Mammary epithelial cell (primary cell): ENCODE measurements at regions of chr11 and their contacts with region 1.

Region 1: GRCh38 chr11:47565340-47566148 is at the start of gene PTPMT1:
- DNase-seq: peak; percentile 62
- H3K4me3 ChIP-seq: peak within 1 kb of the TSS; percentile 73 to 96 (median 94)
- H3K27ac ChIP-seq: peak within 1 kb of the TSS; percentile 67
- H3K4me1 ChIP-seq: peaks cover 10% of the 10 kb centered on the region
- H3K27me3 ChIP-seq: no peaks in the 10 kb centered on the region
- CTCF ChIP-seq: no peak
- total RNA-seq, gene PTPMT1: 57.2 to 65.3 TPM

Region 2: GRCh38 chr11:47538741-47539574 is 26.6 kb before region 1 on chr11:
- CTCF ChIA-PET with region 1: no interaction called
- dilution Hi-C with region 1: no loop called
- in situ Hi-C with region 1: no loop called
- intact Hi-C with region 1: loop called (anchors 2 kb)
- DNase-seq: no peak
- H3K4me3 ChIP-seq: no peak overlapping the region
- H3K27ac ChIP-seq: peak overlapping the region; percentile 76
- H3K4me1 ChIP-seq: peaks cover 28% of the 10 kb centered on the region
- H3K27me3 ChIP-seq: no peaks in the 10 kb centered on the region
- CTCF ChIP-seq: no peak